ENCODE measurements at regions of chr17 and their contacts with region 1.

Region 1: GRCh38 chr17:50094753-50095619 is at the start of gene PDK2:
- DNase-seq: peak; percentile 96
- H3K4me3 Mint-ChIP-seq: peak within 1 kb of the TSS; percentile 92
- H3K27ac Mint-ChIP-seq: peak within 1 kb of the TSS; percentile 82
- H3K4me1 Mint-ChIP-seq: peaks cover 24% of the 10 kb centered on the region
- H3K27me3 Mint-ChIP-seq: no peaks in the 10 kb centered on the region
- CTCF ChIP-seq: no peak
- total RNA-seq, gene PDK2: 9.9 and 11.2 TPM in 2 replicates

Region 2: DNA sequence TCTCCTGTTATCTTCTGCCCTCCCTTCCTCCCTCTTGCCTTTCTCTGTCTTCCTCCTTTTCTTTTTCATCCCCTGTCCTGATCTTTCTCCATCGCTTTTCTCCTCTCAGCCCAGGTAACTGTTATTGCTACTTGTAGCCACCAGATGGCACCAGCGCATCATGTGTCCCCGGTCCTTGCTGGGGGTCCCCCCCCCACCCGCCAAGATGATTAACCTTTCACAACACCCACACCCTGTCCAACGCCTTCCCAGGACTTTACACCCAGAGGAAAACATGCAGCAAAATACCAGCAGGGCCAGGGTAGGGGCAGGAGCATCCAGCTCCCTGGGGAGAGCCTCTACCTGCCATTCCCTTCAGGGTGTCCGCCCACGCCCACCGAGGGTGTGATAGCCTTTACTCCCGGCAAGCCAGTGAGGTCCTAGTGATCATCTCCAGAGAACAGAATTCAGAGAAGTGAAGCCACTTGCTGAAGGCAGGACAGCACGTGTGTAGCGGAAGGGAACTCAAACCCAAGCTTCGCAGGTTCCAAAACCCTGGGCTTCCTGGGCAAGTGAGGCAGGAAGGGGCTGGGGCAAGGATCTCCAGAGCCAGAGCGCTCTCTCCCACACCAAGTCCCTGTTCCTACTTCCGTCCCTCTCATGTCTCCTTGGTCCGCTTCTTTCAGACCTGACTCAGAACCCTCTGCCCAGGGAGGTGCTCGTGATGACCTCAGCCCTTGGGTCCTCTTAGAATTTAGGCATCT is 233.7 kb before region 1 on chr17:
- CTCF ChIA-PET with region 1: no interaction called
- POLR2A ChIA-PET with region 1: no interaction called
- intact Hi-C with region 1: no loop called
- DNase-seq: peak; percentile 65
- H3K4me3 Mint-ChIP-seq: no peak overlapping the region
- H3K27ac Mint-ChIP-seq: no peak overlapping the region
- H3K4me1 Mint-ChIP-seq: no peaks in the 10 kb centered on the region
- H3K27me3 Mint-ChIP-seq: no peaks in the 10 kb centered on the region
- CTCF ChIP-seq: peak; percentile 89

Region 3: DNA sequence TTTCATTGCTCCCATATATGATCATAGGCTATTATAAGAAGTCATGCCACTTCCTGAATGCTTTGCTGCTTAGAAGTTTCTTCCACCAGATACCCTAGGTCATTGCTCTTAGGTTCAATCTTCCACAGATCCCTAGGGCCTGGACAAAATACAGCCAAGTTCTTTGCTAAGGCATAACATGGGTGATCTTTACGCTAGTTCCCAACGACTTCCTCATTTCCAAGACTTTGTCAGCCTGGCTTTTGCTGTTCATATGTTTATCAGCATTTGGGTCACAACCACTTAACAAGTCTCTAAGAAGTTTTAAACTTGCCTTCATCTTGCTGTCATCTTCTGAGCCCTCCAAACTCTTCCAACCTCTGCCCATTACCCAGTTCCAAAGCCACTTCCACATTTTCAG is 79.8 kb before region 1 on chr17:
- CTCF ChIA-PET with region 1: interaction called, 10 read pairs
- POLR2A ChIA-PET with region 1: interaction called, 3 read pairs
- intact Hi-C with region 1: no loop called
- DNase-seq: no peak
- H3K4me3 Mint-ChIP-seq: no peak overlapping the region
- H3K27ac Mint-ChIP-seq: no peak overlapping the region
- H3K4me1 Mint-ChIP-seq: no peaks in the 10 kb centered on the region
- H3K27me3 Mint-ChIP-seq: no peaks in the 10 kb centered on the region
- CTCF ChIP-seq: no peak

Region 4: GRCh38 chr17:50064258-50065001 is 30.6 kb before region 1 on chr17:
- CTCF ChIA-PET with region 1: interaction called, 79 read pairs
- POLR2A ChIA-PET with region 1: interaction called, 18 read pairs
- intact Hi-C with region 1: no loop called
- DNase-seq: peak; percentile 99
- H3K4me3 Mint-ChIP-seq: peak overlapping the region; percentile 63
- H3K27ac Mint-ChIP-seq: peak overlapping the region; percentile 95
- H3K4me1 Mint-ChIP-seq: peaks cover 59% of the 10 kb centered on the region
- H3K27me3 Mint-ChIP-seq: no peaks in the 10 kb centered on the region
- CTCF ChIP-seq: no peak

Region 5: GRCh38 chr17:50107790-50108414 is 12.9 kb after region 1 on chr17:
- CTCF ChIA-PET with region 1: interaction called, 44 read pairs
- POLR2A ChIA-PET with region 1: interaction called, 13 read pairs
- intact Hi-C with region 1: no loop called
- DNase-seq: peak; percentile 87
- H3K4me3 Mint-ChIP-seq: no peak overlapping the region
- H3K27ac Mint-ChIP-seq: peak overlapping the region; percentile 39
- H3K4me1 Mint-ChIP-seq: peaks cover 23% of the 10 kb centered on the region
- H3K27me3 Mint-ChIP-seq: no peaks in the 10 kb centered on the region
- CTCF ChIP-seq: no peak

Region 6: DNA sequence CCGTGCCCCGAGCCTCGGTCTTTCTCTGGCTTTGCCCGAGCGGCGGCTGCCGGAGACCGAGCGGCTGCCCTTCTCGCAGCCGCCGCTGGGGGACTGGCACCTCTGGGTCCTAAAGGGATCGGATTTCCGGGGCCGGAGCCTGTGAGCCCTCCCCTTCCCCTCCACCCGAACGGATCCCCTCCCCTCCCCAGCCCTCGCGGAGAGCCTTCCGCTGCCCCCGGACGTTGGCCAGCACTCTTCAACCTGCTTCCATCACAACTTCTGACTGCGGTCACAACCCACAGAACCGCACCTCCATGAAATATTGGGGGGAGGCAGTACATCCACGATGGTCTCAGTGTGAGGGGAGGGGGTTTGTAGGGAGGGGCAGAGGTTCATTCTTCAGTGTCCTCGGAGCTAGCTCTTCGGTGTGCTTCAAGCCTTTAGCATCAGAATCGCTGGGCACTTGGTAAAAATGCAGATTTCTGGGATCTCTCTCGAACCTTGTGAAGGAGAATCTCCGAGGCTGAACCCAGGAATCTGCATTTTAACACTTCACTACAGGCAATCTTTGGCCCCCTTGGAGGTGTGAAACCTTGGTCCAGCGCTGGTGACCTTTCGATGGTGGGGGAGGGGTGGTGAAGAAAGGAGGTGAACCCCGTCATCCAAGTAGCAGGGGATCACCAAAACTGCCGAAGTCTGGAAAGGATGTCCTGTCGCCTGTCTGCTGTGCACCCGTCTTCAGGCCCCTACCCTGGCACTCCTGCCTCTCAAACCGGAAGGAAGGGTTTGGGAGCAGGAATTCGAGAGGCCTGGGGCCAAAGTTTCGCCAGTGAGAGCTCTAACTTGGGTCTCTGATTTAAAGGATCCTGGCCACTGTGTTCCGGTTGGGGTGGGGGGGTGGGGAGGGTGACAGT is 56.3 kb after region 1 on chr17:
- CTCF ChIA-PET with region 1: interaction called, 23 read pairs
- POLR2A ChIA-PET with region 1: interaction called, 14 read pairs
- intact Hi-C with region 1: no loop called
- DNase-seq: peak; percentile 92
- H3K4me3 Mint-ChIP-seq: peak overlapping the region; percentile 82
- H3K27ac Mint-ChIP-seq: peak overlapping the region; percentile 80
- H3K4me1 Mint-ChIP-seq: peaks cover 26% of the 10 kb centered on the region
- H3K27me3 Mint-ChIP-seq: no peaks in the 10 kb centered on the region
- CTCF ChIP-seq: peak; percentile 52

Region 7: DNA sequence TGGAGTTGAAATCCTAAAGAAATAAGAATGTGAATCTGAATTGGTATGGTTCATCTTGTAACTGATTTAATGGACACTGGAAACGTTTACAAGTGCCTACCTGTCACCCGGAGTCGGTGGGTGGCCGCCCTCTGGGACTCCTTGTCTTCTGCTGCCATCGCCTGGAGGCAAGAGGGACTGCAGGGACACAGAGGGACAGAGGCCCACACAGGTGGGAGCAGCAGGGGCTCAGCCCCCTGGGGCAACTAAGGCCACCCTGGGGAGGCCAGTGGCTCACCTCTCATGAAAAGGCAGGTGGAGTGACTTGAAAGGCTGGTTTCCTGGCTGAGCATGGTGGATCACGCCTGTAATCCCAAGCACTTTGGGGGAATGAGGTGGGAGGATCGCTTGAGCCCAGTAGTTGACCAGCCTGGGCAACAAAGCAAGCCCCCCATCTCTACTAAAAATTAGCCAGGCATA is 202.4 kb after region 1 on chr17:
- CTCF ChIA-PET with region 1: interaction called, 15 read pairs
- POLR2A ChIA-PET with region 1: no interaction called
- intact Hi-C with region 1: no loop called
- DNase-seq: peak; percentile 84
- H3K4me3 Mint-ChIP-seq: no peak overlapping the region
- H3K27ac Mint-ChIP-seq: no peak overlapping the region
- H3K4me1 Mint-ChIP-seq: no peaks in the 10 kb centered on the region
- H3K27me3 Mint-ChIP-seq: no peaks in the 10 kb centered on the region
- CTCF ChIP-seq: peak; percentile 99